Activated CD4-positive, alpha-beta memory T cell treated with anti-CD3 and anti-CD28 coated beads, Interleukin-2, amount 10 ng/mL, durations not matched to agents 7 days and 5 days (primary cell): ENCODE measurements at regions of chr1 and their contacts with region 1.

Region 1: GRCh38 chr1:160428655-160429054 is 28.3 kb downstream of the VANGL2 start:
- DNase-seq: peak; percentile 37
- H3K4me3 Mint-ChIP-seq: peak overlapping the region; percentile 12
- H3K27ac Mint-ChIP-seq: peak overlapping the region; percentile 80
- H3K4me1 Mint-ChIP-seq: peaks cover 56% of the 10 kb centered on the region
- H3K27me3 Mint-ChIP-seq: no peaks in the 10 kb centered on the region

Region 2: GRCh38 chr1:160410406-160411005 is 18.1 kb before region 1 on chr1:
- CTCF ChIA-PET with region 1: no interaction called
- POLR2A ChIA-PET with region 1: no interaction called
- DNase-seq: no peak
- H3K4me3 Mint-ChIP-seq: no peak overlapping the region
- H3K27ac Mint-ChIP-seq: no peak overlapping the region
- H3K4me1 Mint-ChIP-seq: no peaks in the 10 kb centered on the region
- H3K27me3 Mint-ChIP-seq: peaks cover 7% of the 10 kb centered on the region

Region 3: GRCh38 chr1:160451119-160451858 is 22.6 kb after region 1 on chr1:
- CTCF ChIA-PET with region 1: interaction called, 5 read pairs
- POLR2A ChIA-PET with region 1: interaction called, 14 read pairs
- DNase-seq: no peak
- H3K4me3 Mint-ChIP-seq: peak overlapping the region; percentile 18
- H3K27ac Mint-ChIP-seq: peak overlapping the region; percentile 63
- H3K4me1 Mint-ChIP-seq: peaks cover 69% of the 10 kb centered on the region
- H3K27me3 Mint-ChIP-seq: no peaks in the 10 kb centered on the region

Region 4: DNA sequence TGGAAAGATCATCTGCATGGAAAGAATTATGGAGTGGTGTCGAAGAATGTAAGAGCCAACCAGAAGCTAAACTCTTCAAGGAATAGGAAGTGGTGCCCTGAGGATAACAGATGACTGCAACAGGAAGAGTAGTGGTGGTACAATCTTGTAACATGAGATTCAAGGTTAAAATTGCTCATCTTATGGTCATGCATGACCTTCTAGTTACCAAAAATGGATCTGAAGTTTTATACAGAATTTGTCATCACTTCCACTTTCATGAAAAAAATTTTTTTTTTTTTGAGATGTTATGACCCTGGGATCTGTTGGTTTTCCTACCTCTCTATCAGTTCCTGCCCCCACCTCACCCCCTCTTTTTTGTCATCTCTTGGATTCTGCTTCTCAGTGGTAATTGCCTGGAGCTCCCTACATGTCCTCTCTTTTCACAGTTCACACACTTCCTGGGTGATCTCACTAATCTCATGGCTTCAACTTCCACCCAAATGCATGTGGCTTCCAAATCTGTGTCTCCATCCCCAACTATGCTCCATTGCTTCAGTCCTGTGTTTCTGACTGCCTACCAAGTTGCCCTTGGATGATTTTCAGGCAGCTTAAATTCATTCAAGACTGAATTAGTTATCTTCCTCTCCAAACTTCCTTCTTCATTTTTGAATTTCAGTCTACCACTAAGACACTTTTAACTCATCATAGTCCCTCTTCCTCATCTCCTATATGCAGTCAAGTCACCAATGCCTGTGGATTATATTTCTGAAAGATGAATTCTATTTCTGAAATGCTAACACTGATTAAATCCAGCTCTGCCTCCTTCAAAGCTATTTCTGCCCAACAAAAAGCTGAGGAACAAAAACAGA is 46.0 kb after region 1 on chr1:
- CTCF ChIA-PET with region 1: no interaction called
- POLR2A ChIA-PET with region 1: no interaction called
- DNase-seq: no peak
- H3K4me3 Mint-ChIP-seq: no peak overlapping the region
- H3K27ac Mint-ChIP-seq: no peak overlapping the region
- H3K4me1 Mint-ChIP-seq: peaks cover 4% of the 10 kb centered on the region
- H3K27me3 Mint-ChIP-seq: peaks cover 4% of the 10 kb centered on the region

Region 5: GRCh38 chr1:160522622-160523345 is 94.1 kb after region 1 on chr1 and contains the start of gene SLAMF6:
- CTCF ChIA-PET with region 1: interaction called, 10 read pairs
- POLR2A ChIA-PET with region 1: interaction called, 5 read pairs
- DNase-seq: peak; percentile 55
- H3K4me3 Mint-ChIP-seq: peak within 1 kb of the TSS; percentile 84
- H3K27ac Mint-ChIP-seq: peak within 1 kb of the TSS; percentile 93
- H3K4me1 Mint-ChIP-seq: peaks cover 64% of the 10 kb centered on the region
- H3K27me3 Mint-ChIP-seq: no peaks in the 10 kb centered on the region
- total RNA-seq, gene SLAMF6: 32.0 to 33.8 TPM

Region 6: GRCh38 chr1:160550572-160551034 is 121.9 kb after region 1 on chr1:
- CTCF ChIA-PET with region 1: interaction called, 11 read pairs
- POLR2A ChIA-PET with region 1: no interaction called
- DNase-seq: peak; percentile 62
- H3K4me3 Mint-ChIP-seq: no peak overlapping the region
- H3K27ac Mint-ChIP-seq: no peak overlapping the region
- H3K4me1 Mint-ChIP-seq: peaks cover 2% of the 10 kb centered on the region
- H3K27me3 Mint-ChIP-seq: no peaks in the 10 kb centered on the region

Region 7: DNA sequence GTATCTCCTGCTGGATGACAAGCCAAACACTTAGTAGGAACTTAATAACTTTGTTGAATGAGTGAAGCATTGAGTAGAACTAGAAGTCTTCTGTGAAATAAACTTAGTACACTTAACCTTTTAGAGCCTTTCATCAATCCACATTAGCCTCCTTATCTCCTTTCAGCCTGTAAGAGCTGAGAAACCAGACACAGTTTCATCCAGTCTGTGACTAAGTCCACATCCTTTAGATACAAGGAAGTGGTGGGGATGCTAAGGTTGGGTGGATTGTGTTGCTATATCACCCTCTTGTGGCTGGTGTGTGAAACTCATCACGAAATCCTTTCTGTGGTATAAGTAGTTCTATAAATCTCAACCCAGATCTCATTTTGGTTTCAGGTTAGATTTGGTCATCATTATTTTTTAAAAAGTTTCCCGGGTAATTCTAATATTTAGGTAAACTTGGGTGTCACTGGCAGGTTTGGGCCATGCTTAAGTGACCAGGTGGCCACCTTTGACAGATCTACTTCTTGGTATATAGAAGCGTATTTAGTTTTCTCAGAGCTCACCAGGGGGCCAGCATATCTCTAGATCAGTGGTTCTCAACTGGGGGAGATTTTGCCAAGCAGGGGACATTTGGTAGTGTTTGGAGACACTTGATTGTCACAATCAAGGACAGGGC is 178.5 kb after region 1 on chr1:
- CTCF ChIA-PET with region 1: interaction called, 81 read pairs
- POLR2A ChIA-PET with region 1: interaction called, 20 read pairs
- DNase-seq: peak; percentile 70
- H3K4me3 Mint-ChIP-seq: no peak overlapping the region
- H3K27ac Mint-ChIP-seq: peak overlapping the region; percentile 58
- H3K4me1 Mint-ChIP-seq: peaks cover 59% of the 10 kb centered on the region
- H3K27me3 Mint-ChIP-seq: no peaks in the 10 kb centered on the region